OCI-LY7 (cell line): ENCODE measurements at regions of chr9 and their contacts with region 1.

Region 1: DNA sequence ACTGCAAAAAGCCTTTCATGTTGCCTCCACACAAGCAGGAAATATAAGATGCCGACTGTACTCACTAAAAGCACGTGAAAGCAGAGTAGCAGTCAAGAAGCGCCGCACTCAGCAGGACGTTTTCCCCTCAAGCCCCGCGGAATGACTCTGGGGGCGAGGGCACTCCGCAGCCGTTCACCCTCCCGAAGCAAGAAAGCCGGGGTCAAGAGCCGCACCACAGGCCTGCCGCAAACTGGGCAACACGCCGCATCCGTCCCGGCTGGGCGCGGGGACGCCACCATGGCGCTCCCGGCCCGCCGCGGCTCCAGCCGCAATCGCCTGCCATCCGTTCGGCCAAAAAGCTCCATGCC is 364 bp downstream of the RPS6 start:
- DNase-seq: peak; percentile 51
- H3K4me3 ChIP-seq: peak overlapping the region; percentile 96
- H3K27ac ChIP-seq: peak overlapping the region; percentile 75
- H3K4me1 ChIP-seq: peaks cover 42% of the 10 kb centered on the region
- CTCF ChIP-seq: no peak

Region 2: GRCh38 chr9:19048966-19049916 is 330.4 kb before region 1 on chr9 and contains the start of gene RRAGA:
- CTCF ChIA-PET with region 1: no interaction called
- POLR2A ChIA-PET with region 1: no interaction called
- intact Hi-C with region 1: loop called (anchors 1 kb)
- DNase-seq: peak; percentile 97
- H3K4me3 ChIP-seq: peak within 1 kb of the TSS; percentile 78
- H3K27ac ChIP-seq: peak within 1 kb of the TSS; percentile 87
- H3K4me1 ChIP-seq: peaks cover 28% of the 10 kb centered on the region
- CTCF ChIP-seq: peak; percentile 89
- total RNA-seq, gene RRAGA: 16.4 and 25.9 TPM in 2 replicates

Region 3: DNA sequence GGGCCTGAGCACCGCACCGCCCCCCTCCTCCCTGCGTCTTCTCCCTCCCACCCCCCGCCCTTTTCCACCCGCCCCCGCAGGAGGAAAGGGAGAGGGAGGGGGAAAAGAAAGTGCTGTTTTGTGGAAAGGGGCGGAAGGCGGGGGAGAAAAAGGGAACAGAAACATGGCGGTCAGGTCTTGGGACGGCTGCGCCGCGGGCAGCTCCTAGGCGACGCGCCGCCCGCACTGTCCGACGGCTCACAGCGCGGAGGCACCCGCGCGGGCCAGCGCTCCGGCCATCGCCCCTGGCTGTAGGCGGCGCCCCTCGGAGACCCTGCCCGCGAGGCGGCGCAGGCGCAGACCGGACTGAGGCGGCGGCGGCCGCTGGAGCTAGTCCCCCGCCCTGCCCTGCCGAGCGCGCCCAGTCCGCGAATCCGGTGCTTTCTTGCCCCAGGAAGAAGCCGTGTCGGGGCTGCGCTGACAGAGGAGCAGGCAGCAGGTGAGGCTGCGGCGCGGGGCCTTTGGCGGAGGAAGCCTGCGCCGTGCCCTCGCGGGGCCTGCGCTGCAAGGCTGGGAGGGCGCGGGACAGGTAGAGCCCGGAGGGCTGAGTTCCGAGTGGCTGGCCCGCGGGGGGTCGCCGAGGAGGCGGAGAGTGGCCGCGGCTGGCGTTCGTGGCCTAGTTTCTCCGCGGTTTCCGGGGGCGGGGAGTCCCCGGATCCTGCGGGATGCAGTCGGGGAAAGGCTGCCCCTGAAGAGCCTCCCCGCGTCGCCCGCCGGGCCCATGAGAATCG is 149.1 kb before region 1 on chr9 and contains the start of gene DENND4C:
- CTCF ChIA-PET with region 1: no interaction called
- POLR2A ChIA-PET with region 1: interaction called, 4 read pairs
- intact Hi-C with region 1: loop called (anchors 2 kb)
- DNase-seq: peak; percentile 88
- H3K4me3 ChIP-seq: peak within 1 kb of the TSS; percentile 81
- H3K27ac ChIP-seq: peak within 1 kb of the TSS; percentile 45
- H3K4me1 ChIP-seq: peaks cover 29% of the 10 kb centered on the region
- CTCF ChIP-seq: peak; percentile 32; the same call in 1 of the 2 replicates
- total RNA-seq, gene DENND4C: 24.2 and 28.6 TPM in 2 replicates

Region 4: GRCh38 chr9:19408693-19409400 is 29.2 kb after region 1 on chr9 and contains the start of gene ACER2:
- CTCF ChIA-PET with region 1: no interaction called
- POLR2A ChIA-PET with region 1: interaction called, 8 read pairs
- intact Hi-C with region 1: loop called (anchors 1 kb)
- DNase-seq: peak; percentile 94
- H3K4me3 ChIP-seq: peak within 1 kb of the TSS; percentile 84
- H3K27ac ChIP-seq: peak within 1 kb of the TSS; percentile 37
- H3K4me1 ChIP-seq: peaks cover 10% of the 10 kb centered on the region
- CTCF ChIP-seq: 0 out of 2 replicates have a peak, but pooled peaks have one; percentile 6
- total RNA-seq, gene ACER2: 1.4 and 1.6 TPM in 2 replicates